ENCODE measurements at regions of chr7 and their contacts with region 1.

Region 1: DNA sequence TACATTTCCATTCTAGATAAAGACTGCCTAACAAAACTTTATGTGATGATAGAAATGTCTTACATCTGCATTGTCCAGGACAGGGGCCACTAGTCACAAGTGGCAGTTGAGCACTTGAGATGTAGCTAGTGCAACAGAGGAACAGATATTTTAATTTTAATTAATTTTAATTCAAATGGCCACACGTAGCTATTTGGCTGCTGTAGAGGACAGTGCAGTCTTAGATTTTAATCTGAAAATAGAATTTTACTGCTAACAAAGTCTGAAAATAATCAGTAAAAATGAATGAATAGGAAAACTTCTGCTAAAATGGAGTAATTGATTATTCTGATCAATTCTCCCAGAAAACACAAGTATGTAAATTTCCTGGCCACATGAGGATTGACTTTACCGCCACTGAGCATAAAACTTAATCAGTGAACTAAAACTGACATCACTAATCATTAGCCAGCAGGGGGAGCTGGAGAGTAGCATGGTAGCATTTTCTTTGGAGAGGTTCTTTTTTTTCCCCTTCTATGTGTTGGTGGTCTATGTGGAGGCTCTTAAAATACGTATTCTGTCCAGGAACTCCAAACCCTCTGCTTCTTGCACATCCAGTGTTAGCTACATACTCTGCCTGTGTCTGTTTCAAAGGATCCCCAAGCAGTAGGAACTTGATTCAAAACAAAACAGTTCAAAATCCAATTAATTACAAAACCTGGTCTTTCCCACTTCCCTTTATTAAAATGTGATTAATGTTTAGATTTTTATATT is 52.1 kb downstream of the TSPAN12 start:
- DNase-seq: peak; percentile 66
- H3K4me3 ChIP-seq: no peak overlapping the region
- H3K27ac ChIP-seq: no peak overlapping the region
- H3K4me1 ChIP-seq: no peaks in the 10 kb centered on the region
- CTCF ChIP-seq: peak; percentile 91

Region 2: GRCh38 chr7:120353171-120353570 is 452.6 kb before region 1 on chr7:
- CTCF ChIA-PET with region 1: no interaction called
- POLR2A ChIA-PET with region 1: no interaction called
- intact Hi-C with region 1: no loop called
- DNase-seq: no peak
- H3K4me3 ChIP-seq: no peak overlapping the region
- H3K27ac ChIP-seq: no peak overlapping the region
- H3K4me1 ChIP-seq: no peaks in the 10 kb centered on the region
- CTCF ChIP-seq: no peak

Region 3: DNA sequence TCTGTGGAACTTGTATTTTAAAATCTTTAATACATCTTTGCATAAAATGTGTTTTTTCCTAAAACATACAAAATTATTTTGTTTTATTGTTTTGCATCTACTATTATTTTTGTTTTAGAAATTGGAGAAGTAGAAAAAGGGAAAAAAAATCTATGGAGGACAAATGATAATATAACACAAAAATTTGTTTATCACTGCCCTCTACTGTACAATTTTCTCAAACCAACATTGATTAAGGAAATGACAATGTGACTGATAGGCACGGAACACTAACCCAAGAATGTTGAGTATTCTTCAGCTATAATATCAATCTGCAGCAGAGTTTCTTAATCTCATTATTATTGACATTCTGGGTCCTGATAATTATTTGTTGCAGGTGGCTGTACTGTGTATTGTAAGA is 135.3 kb after region 1 on chr7:
- CTCF ChIA-PET with region 1: no interaction called
- POLR2A ChIA-PET with region 1: no interaction called
- intact Hi-C with region 1: loop called (anchors 5 kb)
- DNase-seq: peak; percentile 6
- H3K4me3 ChIP-seq: no peak overlapping the region
- H3K27ac ChIP-seq: no peak overlapping the region
- H3K4me1 ChIP-seq: no peaks in the 10 kb centered on the region
- CTCF ChIP-seq: peak; percentile 66

Region 4: GRCh38 chr7:121081327-121081936 is 275.6 kb after region 1 on chr7:
- CTCF ChIA-PET with region 1: no interaction called
- POLR2A ChIA-PET with region 1: no interaction called
- intact Hi-C with region 1: loop called (anchors 1 kb)
- DNase-seq: peak; percentile 51
- H3K4me3 ChIP-seq: no peak overlapping the region
- H3K27ac ChIP-seq: no peak overlapping the region
- H3K4me1 ChIP-seq: no peaks in the 10 kb centered on the region
- CTCF ChIP-seq: peak; percentile 87

Region 5: DNA sequence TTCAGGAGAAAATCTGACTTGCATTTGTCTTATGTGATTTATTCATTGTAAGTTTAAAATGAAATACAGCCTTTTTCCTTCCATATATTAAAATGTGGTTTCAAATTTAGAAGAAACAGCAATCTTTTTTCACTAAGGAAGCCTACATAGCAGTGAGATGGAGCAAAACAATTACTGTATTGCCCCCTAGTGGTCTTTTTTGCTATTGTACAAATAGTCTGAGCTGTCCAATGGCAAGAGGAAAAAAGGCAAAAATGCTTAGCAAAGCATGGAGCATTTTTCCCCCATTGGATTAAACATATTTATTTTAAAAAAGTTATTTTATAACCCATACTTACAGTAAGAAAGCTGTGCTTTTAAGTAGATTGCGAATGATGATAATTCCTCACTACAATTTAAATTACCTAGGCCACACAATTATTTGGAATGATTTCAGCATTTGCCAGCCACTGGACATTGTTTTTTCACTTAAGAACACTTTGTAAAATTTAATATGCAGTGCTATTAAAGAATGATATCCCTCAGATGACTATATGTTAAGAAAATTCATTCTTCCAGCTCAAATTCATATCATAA is 302.2 kb after region 1 on chr7:
- CTCF ChIA-PET with region 1: no interaction called
- POLR2A ChIA-PET with region 1: no interaction called
- intact Hi-C with region 1: loop called (anchors 2 kb)
- DNase-seq: peak; percentile 67
- H3K4me3 ChIP-seq: no peak overlapping the region
- H3K27ac ChIP-seq: no peak overlapping the region
- H3K4me1 ChIP-seq: no peaks in the 10 kb centered on the region
- CTCF ChIP-seq: peak; percentile 97

Region 6: DNA sequence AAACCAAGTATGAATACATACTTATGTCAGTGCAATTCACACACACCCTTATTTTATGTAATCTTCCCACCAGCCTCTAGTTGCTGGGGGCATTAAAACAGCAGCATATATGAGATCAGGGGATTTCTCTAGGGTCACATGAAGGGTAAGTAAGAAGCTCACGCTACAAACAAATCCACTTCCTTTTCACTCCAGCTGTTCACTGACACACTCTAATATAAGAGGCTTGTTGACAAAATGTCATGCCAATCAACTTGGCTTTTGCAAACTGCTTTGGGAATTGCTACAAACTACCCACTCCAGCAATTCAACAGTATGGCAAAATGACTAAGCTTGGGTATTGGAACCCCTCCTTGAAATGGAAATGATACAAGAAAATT is 580.0 kb after region 1 on chr7:
- CTCF ChIA-PET with region 1: no interaction called
- POLR2A ChIA-PET with region 1: no interaction called
- intact Hi-C with region 1: no loop called
- DNase-seq: peak; percentile 38
- H3K4me3 ChIP-seq: no peak overlapping the region
- H3K27ac ChIP-seq: no peak overlapping the region
- H3K4me1 ChIP-seq: peaks cover 50% of the 10 kb centered on the region
- CTCF ChIP-seq: no peak